ENCODE measurements at regions of chrX and their contacts with region 1.

Region 1: DNA sequence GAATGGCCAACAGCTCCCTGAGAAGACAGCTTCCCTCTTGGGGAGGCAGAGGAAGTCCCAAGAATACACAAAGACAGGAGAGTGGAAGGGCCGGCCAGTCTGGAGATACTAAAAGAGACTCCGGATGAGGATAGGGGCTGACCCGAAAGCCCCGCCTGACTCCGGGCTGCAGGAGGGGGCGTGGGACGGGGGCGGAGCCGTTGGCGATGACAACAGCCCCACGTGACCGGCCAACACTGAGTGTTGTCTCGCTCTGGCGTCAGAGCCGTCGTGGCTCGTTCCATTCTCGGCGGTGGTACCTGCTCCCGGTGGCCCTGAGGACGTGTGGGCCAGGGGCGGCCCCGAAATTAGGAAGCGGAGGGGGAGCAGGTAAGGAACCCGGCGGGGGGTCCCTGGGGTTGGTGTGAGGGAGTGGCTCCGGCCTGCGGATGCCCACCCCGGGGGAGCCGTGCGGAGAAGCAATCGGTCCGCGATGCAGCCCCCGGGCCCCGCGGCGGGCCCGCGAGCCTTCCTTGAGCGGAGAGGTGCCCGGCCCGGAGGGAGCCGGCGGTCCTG is at the start of gene BEX4:
- DNase-seq: peak; percentile 68
- ATAC-seq: peak; percentile 91
- H3K4me3 ChIP-seq: peak within 1 kb of the TSS; percentile 68
- H3K27ac ChIP-seq: no peak within 1 kb of the TSS
- H3K4me1 ChIP-seq: no peaks in the 10 kb centered on the region
- H3K27me3 ChIP-seq: no peaks in the 10 kb centered on the region
- CTCF ChIP-seq: no peak
- total RNA-seq, gene BEX4: 10.9 and 11.5 TPM in 2 replicates

Region 2: GRCh38 chrX:103248553-103248952 is 33.6 kb after region 1 on chrX:
- CTCF ChIA-PET with region 1: interaction called, 10 read pairs
- POLR2A ChIA-PET with region 1: no interaction called
- intact Hi-C with region 1: loop called (anchors 1 kb)
- DNase-seq: peak; percentile 54
- ATAC-seq: peak; percentile 35; the same call in 1 of the 2 replicates
- H3K4me3 ChIP-seq: no peak overlapping the region
- H3K27ac ChIP-seq: no peak overlapping the region
- H3K4me1 ChIP-seq: peaks cover under 1% of the 10 kb centered on the region; the same call in 1 of the 2 replicates
- H3K27me3 ChIP-seq: peaks cover 12% of the 10 kb centered on the region; the same call in 1 of the 2 replicates
- CTCF ChIP-seq: peak; percentile 61

Region 3: DNA sequence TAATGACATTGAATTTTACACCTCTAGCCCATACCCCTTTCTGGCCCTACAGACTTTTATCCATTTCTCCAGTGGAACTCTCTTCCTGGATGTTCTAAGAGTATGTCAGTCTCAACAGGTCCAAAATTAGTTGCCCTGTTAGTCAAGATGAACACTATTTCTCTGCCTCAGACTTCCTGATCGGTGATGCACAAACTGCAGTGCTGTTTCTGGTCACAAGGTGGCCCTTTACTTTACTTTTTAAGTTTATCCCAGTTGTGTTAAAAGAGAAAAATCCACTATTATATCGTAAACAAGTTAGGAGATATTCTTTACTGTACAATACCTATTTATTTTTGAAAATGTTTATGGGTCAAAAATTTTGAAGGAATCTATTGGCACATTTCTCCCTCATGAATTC is 128.2 kb after region 1 on chrX:
- CTCF ChIA-PET with region 1: no interaction called
- POLR2A ChIA-PET with region 1: no interaction called
- intact Hi-C with region 1: loop called (anchors 10 kb)
- DNase-seq: peak; percentile 71
- ATAC-seq: peak; percentile 45
- H3K4me3 ChIP-seq: no peak overlapping the region
- H3K27ac ChIP-seq: no peak overlapping the region
- H3K4me1 ChIP-seq: no peaks in the 10 kb centered on the region
- H3K27me3 ChIP-seq: peaks cover 7% of the 10 kb centered on the region; the same call in 1 of the 2 replicates
- CTCF ChIP-seq: peak; percentile 75